Right lobe of liver (tissue), 6 donors: ENCODE measurements at regions of chr4 and their contacts with region 1.

Region 1: GRCh38 chr4:87363567-87363966 is 27.4 kb downstream of the HSD17B11 start:
- DNase-seq: no peak
- ATAC-seq: no peak
- H3K4me3 ChIP-seq: no peak overlapping the region
- H3K27ac ChIP-seq: no peak overlapping the region
- H3K4me1 ChIP-seq: peaks cover 0 to 16% (median 4%) of the 10 kb centered on the region in 4 donors
- H3K27me3 ChIP-seq: no peaks in the 10 kb centered on the region
- CTCF ChIP-seq: no peak
- POLR2A ChIP-seq: no peak

Region 2: DNA sequence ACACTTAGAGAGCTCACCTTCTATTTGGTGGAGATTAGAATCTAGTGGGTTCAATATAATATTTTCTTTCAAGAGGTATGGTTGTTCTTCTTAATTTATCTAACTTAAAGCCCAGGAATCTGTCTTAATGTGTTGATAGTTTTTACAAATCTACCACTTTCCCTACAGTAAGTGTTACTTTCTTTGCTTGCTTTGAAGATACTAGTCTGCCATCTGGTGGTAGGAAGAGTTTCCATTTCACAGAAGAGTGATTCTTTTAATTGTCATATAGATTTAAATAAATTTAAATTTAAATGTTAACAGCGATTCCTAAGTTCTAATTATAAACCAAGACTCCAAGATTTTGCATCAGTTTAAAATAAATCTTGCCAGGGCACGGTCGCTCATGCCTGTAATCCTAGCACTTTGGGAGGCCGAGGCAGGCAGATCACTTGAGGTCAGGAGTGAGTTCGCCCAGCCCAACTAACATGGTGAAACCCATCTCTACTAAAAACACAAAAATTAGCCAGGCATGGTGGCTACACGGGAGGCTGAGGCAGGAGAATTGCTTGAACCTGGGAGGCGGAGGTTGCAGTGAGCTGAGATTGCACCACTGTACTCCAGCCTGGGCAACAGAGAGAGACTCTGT is 102.3 kb after region 1 on chr4:
- intact Hi-C with region 1: loop called in 1 of 2 experiments (anchors 10 kb)
- DNase-seq: no peak
- ATAC-seq: peak; percentile 75 to 82 (median 80)
- H3K4me3 ChIP-seq: no peak overlapping the region
- H3K27ac ChIP-seq: no peak overlapping the region
- H3K4me1 ChIP-seq: peaks cover 0 to 5% (median 0%) of the 10 kb centered on the region in 4 donors
- H3K27me3 ChIP-seq: no peaks in the 10 kb centered on the region
- CTCF ChIP-seq: peak; percentile 70 to 78 (median 72)
- POLR2A ChIP-seq: no peak